Heart left ventricle (tissue), 16 donors: ENCODE measurements at regions of chr14 and their contacts with region 1.

Region 1: DNA sequence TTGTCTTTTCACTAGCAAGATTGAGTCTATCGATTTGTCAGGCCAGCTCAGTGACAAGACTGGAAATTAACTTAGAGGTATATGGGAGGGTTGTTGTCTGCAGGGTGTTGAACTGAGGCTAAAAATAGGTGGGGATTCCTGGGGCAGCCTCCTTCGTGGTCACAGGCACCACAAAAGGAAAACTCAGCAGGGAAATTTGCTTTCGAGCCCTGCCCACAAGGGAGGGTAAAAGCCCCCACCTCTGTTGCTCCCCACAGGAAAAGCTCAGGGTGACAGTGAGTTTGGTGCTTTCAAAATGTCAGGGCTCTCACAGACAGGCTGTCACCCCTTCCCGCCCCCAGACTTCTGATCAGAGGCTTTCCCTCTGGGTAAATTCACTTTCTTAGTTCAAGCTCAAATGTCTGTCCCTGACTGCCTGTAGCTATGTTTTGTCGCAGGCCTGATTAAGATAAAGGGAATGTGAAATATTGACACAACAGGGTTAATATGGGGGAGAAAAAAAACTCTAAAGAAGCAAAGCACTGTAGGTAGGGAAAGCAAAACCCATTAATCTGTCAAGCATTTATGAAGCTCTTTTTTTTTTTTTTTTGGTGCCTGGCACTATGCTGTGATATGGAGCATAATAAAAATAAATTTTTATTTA is 11.7 kb upstream of the NFKBIA start:
- DNase-seq: no peak
- ATAC-seq: no peak
- H3K4me3 ChIP-seq: no peak overlapping the region
- H3K27ac ChIP-seq: peak overlapping the region in 3 of 12 donors; percentile 5 to 72 (median 60)
- H3K4me1 ChIP-seq: peaks cover 2 to 38% (median 21%) of the 10 kb centered on the region in 12 donors
- H3K27me3 ChIP-seq: no peaks in the 10 kb centered on the region
- CTCF ChIP-seq: no peak
- POLR2A ChIP-seq: no peak

Region 2: GRCh38 chr14:34682787-34683321 is 733.4 kb before region 1 on chr14:
- intact Hi-C with region 1: loop called in 1 of 10 experiments (anchors 10 kb)
- DNase-seq: peak in 1 of 5 donors; percentile 30
- ATAC-seq: peak; percentile 73 to 94 (median 87)
- H3K4me3 ChIP-seq: peak overlapping the region in 2 of 12 donors; percentile 13 to 15
- H3K27ac ChIP-seq: peak overlapping the region in 6 of 12 donors; percentile 12 to 79 (median 58)
- H3K4me1 ChIP-seq: peaks cover 0 to 7% (median 0%) of the 10 kb centered on the region in 12 donors
- H3K27me3 ChIP-seq: peaks cover 0 to 5% (median 0%) of the 10 kb centered on the region in 9 donors
- CTCF ChIP-seq: no peak
- POLR2A ChIP-seq: no peak

Region 3: GRCh38 chr14:34920339-34920738 is 495.9 kb before region 1 on chr14:
- intact Hi-C with region 1: no loop called
- DNase-seq: no peak
- ATAC-seq: no peak
- H3K4me3 ChIP-seq: no peak overlapping the region
- H3K27ac ChIP-seq: no peak overlapping the region
- H3K4me1 ChIP-seq: peaks cover 0 to 7% (median 0%) of the 10 kb centered on the region in 12 donors
- H3K27me3 ChIP-seq: no peaks in the 10 kb centered on the region
- CTCF ChIP-seq: no peak
- POLR2A ChIP-seq: no peak

Region 4: GRCh38 chr14:35046048-35046741 is 370.0 kb before region 1 on chr14 and contains the start of gene FAM177A1:
- intact Hi-C with region 1: loop called in 2 of 10 experiments (anchors 5 kb)
- DNase-seq: peak; percentile 97 to 99 (median 99)
- ATAC-seq: peak; percentile 96 to 98 (median 98)
- H3K4me3 ChIP-seq: peak within 1 kb of the TSS; percentile 62 to 95 (median 84)
- H3K27ac ChIP-seq: peak within 1 kb of the TSS; percentile 91 to 99 (median 96)
- H3K4me1 ChIP-seq: peaks cover 0 to 43% (median 27%) of the 10 kb centered on the region in 12 donors
- H3K27me3 ChIP-seq: no peaks in the 10 kb centered on the region
- CTCF ChIP-seq: no peak
- POLR2A ChIP-seq: peak; percentile 74 to 96
- total RNA-seq, gene FAM177A1: 56.3 to 129 (median 98.8) TPM

Region 5: DNA sequence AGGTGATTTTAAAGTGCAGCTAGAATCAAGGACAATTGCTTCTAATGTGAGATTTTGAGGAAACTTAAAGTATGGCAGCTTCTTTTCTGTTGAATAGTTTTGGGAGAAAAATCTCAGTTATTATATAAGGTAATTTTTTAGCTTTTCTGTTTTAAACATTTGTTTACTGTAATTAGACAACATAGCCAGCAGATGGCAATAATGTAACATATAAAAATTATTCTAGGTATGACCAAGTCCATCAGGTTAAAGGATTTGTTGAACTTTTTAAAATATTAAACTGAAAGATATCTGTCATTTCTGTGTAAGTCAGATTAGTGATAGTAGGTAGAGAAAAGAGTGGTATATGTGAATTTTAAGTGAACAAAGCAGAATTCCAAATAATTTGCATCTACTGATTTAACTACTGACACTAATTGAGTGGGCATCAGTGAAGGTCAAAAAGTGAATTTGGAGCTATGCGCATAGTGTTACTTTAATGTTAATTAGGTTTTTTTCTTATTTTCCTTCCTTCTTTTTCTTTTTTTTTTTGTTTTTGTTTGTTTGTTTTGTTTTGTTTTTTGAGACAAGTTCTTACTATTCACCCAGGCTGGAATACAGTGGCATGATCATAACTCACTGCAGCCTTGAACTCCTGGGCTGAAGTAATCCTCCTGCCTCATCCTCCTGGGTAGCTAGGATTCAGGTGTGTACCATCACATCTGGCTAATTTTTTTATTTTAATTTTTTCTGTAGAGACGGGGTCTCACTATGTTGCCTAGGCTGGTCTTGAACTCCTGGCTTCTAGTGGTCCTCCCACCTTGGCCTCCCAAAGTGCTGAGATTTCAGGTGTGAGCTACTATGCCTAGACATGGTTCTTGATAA is 275.3 kb before region 1 on chr14:
- intact Hi-C with region 1: loop called in 7 of 10 experiments (anchors 2 to 5 kb)
- DNase-seq: no peak
- ATAC-seq: no peak
- H3K4me3 ChIP-seq: no peak overlapping the region
- H3K27ac ChIP-seq: no peak overlapping the region
- H3K4me1 ChIP-seq: no peaks in the 10 kb centered on the region
- H3K27me3 ChIP-seq: no peaks in the 10 kb centered on the region
- CTCF ChIP-seq: peak in 11 of 12 donors; percentile 14 to 67 (median 45)
- POLR2A ChIP-seq: no peak

Region 6: DNA sequence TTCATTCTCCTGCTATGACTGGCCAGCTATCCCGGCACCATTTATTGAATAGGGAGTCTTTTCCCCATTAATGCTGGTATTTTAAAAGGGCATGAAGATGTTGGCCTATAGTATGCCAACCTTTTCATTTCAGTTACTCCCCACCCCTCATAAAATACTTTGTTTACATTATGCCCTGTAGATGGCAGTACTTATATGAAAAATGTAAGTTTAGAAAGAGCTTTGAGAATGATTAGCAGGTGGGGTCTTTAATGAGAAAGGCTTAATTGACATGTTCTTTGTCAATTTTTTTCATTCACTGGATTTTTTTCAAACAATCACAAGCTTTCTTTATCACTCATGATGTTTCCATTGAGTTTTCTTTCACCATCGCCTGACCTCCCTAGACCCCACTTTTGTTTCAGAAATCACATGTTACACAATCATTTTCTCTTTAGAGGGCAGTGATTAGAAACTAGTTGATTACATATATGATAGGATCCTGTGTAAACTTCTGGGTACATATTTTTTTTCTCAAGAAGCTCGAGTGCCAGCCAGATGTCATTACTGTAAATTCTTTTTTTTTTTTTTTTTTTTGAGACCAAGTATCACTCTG is 186.6 kb before region 1 on chr14:
- intact Hi-C with region 1: loop called in 1 of 10 experiments (anchors 5 kb)
- DNase-seq: no peak
- ATAC-seq: no peak
- H3K4me3 ChIP-seq: no peak overlapping the region
- H3K27ac ChIP-seq: no peak overlapping the region
- H3K4me1 ChIP-seq: peaks cover 0 to 33% (median 0%) of the 10 kb centered on the region in 12 donors
- H3K27me3 ChIP-seq: no peaks in the 10 kb centered on the region
- CTCF ChIP-seq: peak in 11 of 12 donors; percentile 9 to 49 (median 30)
- POLR2A ChIP-seq: no peak

Region 7: GRCh38 chr14:35470755-35471154 is 54.5 kb after region 1 on chr14:
- intact Hi-C with region 1: no loop called
- DNase-seq: no peak
- ATAC-seq: no peak
- H3K4me3 ChIP-seq: no peak overlapping the region
- H3K27ac ChIP-seq: no peak overlapping the region
- H3K4me1 ChIP-seq: no peaks in the 10 kb centered on the region
- H3K27me3 ChIP-seq: peaks cover 0 to 2% (median 0%) of the 10 kb centered on the region in 9 donors
- CTCF ChIP-seq: no peak
- POLR2A ChIP-seq: no peak